ENCODE measurements at regions of chr5 and their contacts with region 1.

Region 1: DNA sequence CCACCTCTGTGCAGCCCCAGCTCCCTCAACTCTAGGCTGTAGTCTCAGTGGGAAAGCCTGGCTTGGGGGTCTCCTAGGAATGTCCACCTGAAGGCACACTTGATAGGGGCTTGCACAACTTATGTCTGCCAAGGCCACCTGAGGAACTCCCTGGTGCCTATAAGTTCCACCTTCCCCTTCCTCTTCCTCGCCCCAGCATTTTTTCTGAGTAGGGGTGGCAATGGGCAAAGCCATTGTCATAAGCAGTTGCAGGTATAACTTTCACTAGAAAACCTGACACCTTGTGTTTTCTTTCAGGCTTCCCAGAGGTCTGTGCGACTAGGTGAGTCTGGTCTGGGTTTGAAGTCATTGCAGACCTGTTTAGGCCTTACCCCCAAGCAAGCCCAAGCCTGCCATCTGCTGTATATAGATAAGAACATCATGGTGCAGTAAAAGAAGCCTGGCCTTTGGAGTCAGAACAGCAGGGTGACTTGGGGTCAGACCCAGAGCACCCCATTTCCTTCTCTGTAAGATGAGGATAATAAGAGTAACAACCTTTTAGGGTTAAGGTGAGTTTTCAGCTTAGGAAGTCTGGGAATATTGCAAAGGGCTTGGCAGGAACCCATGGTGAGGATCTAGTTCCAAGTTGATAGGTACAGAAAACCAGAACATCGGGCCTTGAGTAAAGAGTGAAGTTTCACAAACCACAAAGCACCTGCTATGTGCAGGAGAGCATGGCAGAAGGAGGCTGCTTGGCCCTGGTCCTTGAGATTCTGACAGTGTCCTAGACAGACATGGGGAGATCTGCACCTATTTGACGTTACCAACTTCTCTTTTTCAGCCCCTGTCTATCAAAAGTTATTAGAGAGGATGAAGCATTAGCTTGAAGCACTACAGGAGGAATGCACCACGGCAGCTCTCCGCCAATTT is 33.8 kb downstream of the TGFBI start:
- DNase-seq: peak; percentile 28
- CTCF ChIP-seq: peak; percentile 26

Region 2: DNA sequence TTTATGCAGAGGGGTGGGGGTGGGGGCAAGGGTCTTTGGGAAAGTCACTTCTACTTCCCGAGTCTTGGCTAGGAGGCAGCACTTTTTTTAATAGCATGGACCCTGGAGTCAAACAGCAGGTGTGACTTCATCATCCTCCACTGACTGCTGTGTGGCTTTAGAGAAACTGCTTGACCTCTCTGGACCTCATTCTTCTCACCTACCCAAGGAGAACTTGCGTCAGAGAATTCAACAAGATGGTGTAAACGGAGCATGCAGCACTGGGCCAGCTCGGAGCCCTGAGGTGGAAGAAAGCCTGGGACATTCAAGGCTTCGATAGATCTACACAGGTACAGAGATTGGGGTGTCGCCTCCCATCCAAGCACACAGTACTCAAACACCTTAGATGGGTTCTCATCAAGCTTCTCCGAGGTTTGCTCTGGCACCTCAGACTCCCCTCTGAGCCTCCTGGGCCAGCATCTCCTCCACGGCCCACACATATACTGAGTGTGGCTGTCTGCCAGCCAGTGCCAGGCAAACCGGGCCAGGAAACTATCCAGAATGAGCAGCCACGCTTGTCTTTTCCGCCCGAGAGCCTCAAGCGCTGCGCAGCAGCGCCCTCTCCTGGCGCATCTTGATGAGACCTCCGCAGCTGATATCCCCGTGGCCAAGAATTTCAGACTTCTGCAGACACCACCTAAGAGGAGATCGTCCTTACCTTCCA is 232.8 kb before region 1 on chr5:
- CTCF ChIA-PET with region 1: no interaction called
- POLR2A ChIA-PET with region 1: no interaction called
- DNase-seq: peak; percentile 67
- CTCF ChIP-seq: peak; percentile 60

Region 3: GRCh38 chr5:136046246-136046645 is 16.4 kb before region 1 on chr5:
- CTCF ChIA-PET with region 1: no interaction called
- POLR2A ChIA-PET with region 1: no interaction called
- DNase-seq: no peak
- CTCF ChIP-seq: no peak

Region 4: DNA sequence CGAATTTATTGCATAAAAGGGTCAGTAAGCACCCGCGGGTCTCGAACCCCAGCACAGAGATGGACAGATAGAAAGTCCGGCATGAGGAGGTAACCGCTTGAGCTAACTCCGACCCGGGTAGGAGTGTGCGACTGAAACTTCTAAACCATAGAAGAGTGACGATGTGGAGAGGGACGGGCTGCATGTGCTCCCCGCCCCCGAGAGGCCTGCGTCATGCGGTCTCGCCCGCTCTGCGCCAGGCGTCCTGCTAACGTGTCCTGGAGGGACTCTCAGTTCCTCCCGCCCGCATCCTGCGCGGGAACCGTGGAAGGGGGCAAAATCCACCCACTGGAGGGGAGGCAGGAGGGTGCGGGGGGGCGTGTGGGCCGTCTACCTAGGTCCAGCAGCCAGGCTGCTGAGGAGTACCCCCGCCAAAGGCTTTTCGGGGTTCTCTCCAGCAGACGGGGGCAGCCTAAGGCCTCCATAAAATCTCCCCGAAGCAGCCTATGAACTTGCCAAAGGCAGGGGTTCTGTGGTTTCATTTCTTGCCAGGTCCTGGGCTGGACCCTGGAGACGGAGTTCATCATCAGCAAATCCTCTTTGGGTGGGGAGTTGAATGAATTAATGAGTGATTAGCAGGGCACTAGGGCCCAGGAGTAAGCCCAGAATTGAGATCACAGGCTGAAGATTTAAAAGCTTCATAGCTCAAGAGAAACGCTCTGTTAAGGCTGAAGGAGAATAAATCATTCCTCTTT is 18.0 kb after region 1 on chr5:
- CTCF ChIA-PET with region 1: interaction called, 20 read pairs
- POLR2A ChIA-PET with region 1: no interaction called
- DNase-seq: peak; percentile 82
- CTCF ChIP-seq: no peak

Measured in GM10248 (cell line).